ENCODE measurements at regions of chrX and their contacts with region 1.

Region 1: GRCh38 chrX:152915527-152916241 is 17.8 kb downstream of the ZNF185 start:
- DNase-seq: peak; percentile 29
- H3K4me3 Mint-ChIP-seq: no peak overlapping the region
- H3K27ac Mint-ChIP-seq: no peak overlapping the region
- H3K4me1 Mint-ChIP-seq: no peaks in the 10 kb centered on the region
- H3K27me3 Mint-ChIP-seq: no peaks in the 10 kb centered on the region
- CTCF ChIP-seq: peak; percentile 32

Region 2: GRCh38 chrX:152904151-152905080 is 11.3 kb before region 1 on chrX:
- CTCF ChIA-PET with region 1: interaction called, 20 read pairs
- POLR2A ChIA-PET with region 1: no interaction called
- intact Hi-C with region 1: no loop called
- DNase-seq: peak; percentile 60
- H3K4me3 Mint-ChIP-seq: no peak overlapping the region
- H3K27ac Mint-ChIP-seq: no peak overlapping the region
- H3K4me1 Mint-ChIP-seq: no peaks in the 10 kb centered on the region
- H3K27me3 Mint-ChIP-seq: no peaks in the 10 kb centered on the region
- CTCF ChIP-seq: peak; percentile 68

Measured in MCF 10A (cell line).